Caco-2 (cell line): ENCODE measurements at regions of chr1 and their contacts with region 1.

Region 1: DNA sequence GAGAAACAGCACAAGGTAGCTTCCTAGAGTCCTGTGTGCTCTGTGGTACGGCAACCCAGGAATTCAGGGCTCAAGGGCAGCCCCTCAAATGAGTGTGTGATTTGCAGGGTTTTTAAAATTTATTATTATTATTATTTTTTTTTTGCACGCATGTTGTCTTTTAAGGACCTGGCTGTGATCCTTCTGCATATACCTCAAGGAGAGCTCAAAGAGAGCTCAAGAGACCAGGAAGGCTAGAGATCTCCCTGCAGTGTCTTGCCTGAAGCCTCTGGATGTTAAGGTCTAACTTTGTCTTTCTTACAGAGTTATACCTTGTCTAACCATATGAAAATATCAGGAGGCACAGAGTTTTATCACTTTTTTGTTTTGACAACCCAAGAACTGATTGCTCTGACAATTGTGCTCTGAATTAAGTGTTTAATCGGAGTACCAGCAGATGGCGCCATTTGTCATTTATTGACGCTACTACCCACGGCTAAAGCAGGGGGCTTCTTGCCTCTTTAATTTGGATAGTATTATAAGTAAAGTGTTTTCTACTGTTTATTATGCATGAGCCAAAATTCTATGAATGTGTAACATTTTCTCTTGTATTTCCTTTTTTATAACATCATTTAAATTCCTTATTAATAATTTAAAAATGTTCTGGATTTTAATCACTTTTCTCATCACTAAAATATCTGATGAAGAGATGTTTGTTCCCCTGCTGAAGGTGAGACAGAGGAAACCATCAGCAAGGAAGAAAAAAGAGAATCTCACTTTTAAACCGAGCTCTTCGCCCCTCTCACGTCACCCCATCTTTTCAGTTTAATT is 35.8 kb upstream of the LMO4 start:
- DNase-seq: peak; percentile 53 to 55
- H3K4me3 ChIP-seq: no peak overlapping the region
- H3K4me3 Mint-ChIP-seq: no peak overlapping the region
- H3K27ac Mint-ChIP-seq: no peak overlapping the region
- H3K4me1 ChIP-seq: no peaks in the 10 kb centered on the region
- H3K4me1 Mint-ChIP-seq: no peaks in the 10 kb centered on the region
- H3K27me3 ChIP-seq: no peaks in the 10 kb centered on the region
- H3K27me3 Mint-ChIP-seq: no peaks in the 10 kb centered on the region
- CTCF ChIP-seq: peak; percentile 44 to 51

Region 2: DNA sequence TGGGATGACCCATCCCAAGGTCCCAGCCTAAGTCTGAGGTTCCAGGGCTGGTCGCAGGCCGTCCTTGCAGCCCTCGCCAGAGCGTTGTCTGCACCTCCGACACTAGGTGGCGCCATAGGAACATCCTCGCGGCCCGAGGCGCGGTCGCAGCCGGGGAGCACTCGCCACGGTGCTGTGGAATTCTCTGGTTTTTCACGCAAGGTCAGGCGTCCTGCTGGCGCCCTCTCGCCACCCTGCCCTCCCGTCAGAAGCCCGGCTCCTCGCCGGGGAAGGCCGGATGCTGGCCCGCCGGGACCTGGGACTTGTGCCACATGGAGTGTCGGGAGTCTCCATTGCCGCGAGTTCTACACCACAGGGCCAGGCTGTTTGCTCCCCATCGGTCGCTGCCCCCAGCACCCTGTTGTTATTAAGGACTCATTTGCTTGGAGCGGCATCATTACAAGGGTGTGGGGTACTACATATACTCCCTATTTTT is 161.0 kb before region 1 on chr1:
- CTCF ChIA-PET with region 1: no interaction called
- POLR2A ChIA-PET with region 1: no interaction called
- intact Hi-C with region 1: loop called (anchors 2 kb)
- DNase-seq: peak; percentile 57 to 68
- H3K4me3 ChIP-seq: no peak overlapping the region
- H3K4me3 Mint-ChIP-seq: peak overlapping the region; percentile 35
- H3K27ac Mint-ChIP-seq: no peak overlapping the region
- H3K4me1 ChIP-seq: no peaks in the 10 kb centered on the region
- H3K4me1 Mint-ChIP-seq: no peaks in the 10 kb centered on the region
- H3K27me3 ChIP-seq: no peaks in the 10 kb centered on the region
- H3K27me3 Mint-ChIP-seq: no peaks in the 10 kb centered on the region
- CTCF ChIP-seq: peak; percentile 72 to 79

Region 3: GRCh38 chr1:87226341-87226760 is 66.5 kb before region 1 on chr1:
- CTCF ChIA-PET with region 1: no interaction called
- POLR2A ChIA-PET with region 1: no interaction called
- intact Hi-C with region 1: no loop called
- DNase-seq: peak in 1 of 2 experiments; percentile 1
- H3K4me3 ChIP-seq: no peak overlapping the region
- H3K4me3 Mint-ChIP-seq: no peak overlapping the region
- H3K27ac Mint-ChIP-seq: peak overlapping the region; percentile 36
- H3K4me1 ChIP-seq: no peaks in the 10 kb centered on the region
- H3K4me1 Mint-ChIP-seq: no peaks in the 10 kb centered on the region
- H3K27me3 ChIP-seq: no peaks in the 10 kb centered on the region
- H3K27me3 Mint-ChIP-seq: peaks cover 2% of the 10 kb centered on the region
- CTCF ChIP-seq: no peak

Region 4: DNA sequence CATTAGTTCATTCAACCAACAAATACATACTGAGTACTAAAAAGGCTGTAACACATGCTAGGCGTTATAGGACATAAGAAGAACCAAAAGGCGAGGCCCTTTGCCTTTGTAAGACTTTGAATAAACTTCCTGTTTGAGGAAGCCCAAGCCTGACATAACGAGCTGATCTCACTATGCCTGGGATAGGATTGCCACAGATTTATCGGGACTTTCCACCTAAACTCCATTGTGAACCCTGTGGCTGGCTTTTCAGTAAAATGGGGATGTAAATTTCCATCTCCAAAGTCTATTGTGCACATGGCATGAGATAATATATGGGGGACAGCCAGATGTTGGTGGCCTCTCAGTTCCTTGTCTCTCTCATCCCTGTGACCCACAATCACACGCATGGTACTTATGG is 77.7 kb after region 1 on chr1:
- CTCF ChIA-PET with region 1: no interaction called
- POLR2A ChIA-PET with region 1: no interaction called
- intact Hi-C with region 1: no loop called
- DNase-seq: no peak
- H3K4me3 ChIP-seq: no peak overlapping the region
- H3K4me3 Mint-ChIP-seq: no peak overlapping the region
- H3K27ac Mint-ChIP-seq: peak overlapping the region; percentile 42
- H3K4me1 ChIP-seq: no peaks in the 10 kb centered on the region
- H3K4me1 Mint-ChIP-seq: no peaks in the 10 kb centered on the region
- H3K27me3 ChIP-seq: no peaks in the 10 kb centered on the region
- H3K27me3 Mint-ChIP-seq: no peaks in the 10 kb centered on the region
- CTCF ChIP-seq: no peak